A673 (cell line): ENCODE measurements at regions of chr17 and their contacts with region 1.

Region 1: GRCh38 chr17:58082870-58083490 is at the start of gene DYNLL2:
- DNase-seq: peak; percentile 97
- H3K4me3 ChIP-seq: peak within 1 kb of the TSS; percentile 95
- H3K27ac ChIP-seq: peak within 1 kb of the TSS; percentile 88
- H3K4me1 ChIP-seq: peaks cover 15% of the 10 kb centered on the region
- H3K27me3 ChIP-seq: peaks cover 14% of the 10 kb centered on the region
- CTCF ChIP-seq: no peak
- total RNA-seq, gene DYNLL2: 29.1 and 29.8 TPM in 2 replicates

Region 2: GRCh38 chr17:57849874-57850754 is 232.9 kb before region 1 on chr17 and contains the start of gene MRPS23:
- CTCF ChIA-PET with region 1: no interaction called
- POLR2A ChIA-PET with region 1: interaction called, 13 read pairs
- intact Hi-C with region 1: loop called (anchors 10 kb)
- DNase-seq: peak; percentile 99
- H3K4me3 ChIP-seq: peak within 1 kb of the TSS; percentile 85
- H3K27ac ChIP-seq: peak within 1 kb of the TSS; percentile 78
- H3K4me1 ChIP-seq: peaks cover 17% of the 10 kb centered on the region
- H3K27me3 ChIP-seq: no peaks in the 10 kb centered on the region
- CTCF ChIP-seq: no peak
- total RNA-seq, gene MRPS23: 94.2 and 100 TPM in 2 replicates

Region 3: DNA sequence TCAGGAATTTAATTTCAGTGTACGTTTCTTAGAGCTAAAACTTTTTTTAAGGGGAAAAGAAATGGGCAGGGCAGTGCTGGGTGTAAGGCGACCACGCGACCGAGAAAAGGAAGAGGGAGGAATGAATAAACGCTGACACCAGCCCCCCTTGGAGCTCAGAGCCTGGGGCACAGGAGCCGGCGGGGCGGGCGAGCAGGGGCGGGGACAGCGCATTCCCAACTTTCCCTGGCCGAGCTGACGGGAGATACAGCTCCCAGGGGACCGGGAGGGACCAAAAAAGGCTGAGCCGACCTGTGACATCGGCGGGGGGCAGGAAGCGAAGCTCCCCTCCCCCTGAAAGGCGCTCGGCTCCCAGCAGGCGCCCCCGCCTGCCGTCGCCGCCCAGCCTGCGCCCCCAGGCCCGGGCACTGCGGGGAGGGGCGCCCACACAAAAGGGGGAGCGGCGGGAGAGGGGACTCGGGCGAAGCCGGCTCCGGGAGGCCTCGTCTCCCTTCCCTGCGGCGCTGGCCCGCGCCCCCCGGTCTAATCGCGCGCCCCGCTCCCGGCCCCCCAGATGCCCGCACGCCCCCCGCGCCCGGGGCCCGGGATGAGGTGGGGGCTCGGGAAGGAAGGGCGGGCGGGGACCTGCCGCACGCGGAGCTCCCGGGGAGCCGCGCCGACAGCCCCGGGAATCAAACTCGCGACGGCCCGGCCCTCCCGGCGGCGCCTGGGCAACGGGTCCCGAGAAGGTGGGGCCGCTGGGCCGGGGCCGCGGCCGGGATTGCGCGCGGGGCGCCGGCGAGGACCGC is 128.4 kb before region 1 on chr17:
- CTCF ChIA-PET with region 1: no interaction called
- POLR2A ChIA-PET with region 1: interaction called, 12 read pairs
- intact Hi-C with region 1: no loop called
- DNase-seq: peak; percentile 95
- H3K4me3 ChIP-seq: peak overlapping the region; percentile 83
- H3K27ac ChIP-seq: peak overlapping the region; percentile 90
- H3K4me1 ChIP-seq: peaks cover 53% of the 10 kb centered on the region
- H3K27me3 ChIP-seq: no peaks in the 10 kb centered on the region
- CTCF ChIP-seq: no peak

Region 4: DNA sequence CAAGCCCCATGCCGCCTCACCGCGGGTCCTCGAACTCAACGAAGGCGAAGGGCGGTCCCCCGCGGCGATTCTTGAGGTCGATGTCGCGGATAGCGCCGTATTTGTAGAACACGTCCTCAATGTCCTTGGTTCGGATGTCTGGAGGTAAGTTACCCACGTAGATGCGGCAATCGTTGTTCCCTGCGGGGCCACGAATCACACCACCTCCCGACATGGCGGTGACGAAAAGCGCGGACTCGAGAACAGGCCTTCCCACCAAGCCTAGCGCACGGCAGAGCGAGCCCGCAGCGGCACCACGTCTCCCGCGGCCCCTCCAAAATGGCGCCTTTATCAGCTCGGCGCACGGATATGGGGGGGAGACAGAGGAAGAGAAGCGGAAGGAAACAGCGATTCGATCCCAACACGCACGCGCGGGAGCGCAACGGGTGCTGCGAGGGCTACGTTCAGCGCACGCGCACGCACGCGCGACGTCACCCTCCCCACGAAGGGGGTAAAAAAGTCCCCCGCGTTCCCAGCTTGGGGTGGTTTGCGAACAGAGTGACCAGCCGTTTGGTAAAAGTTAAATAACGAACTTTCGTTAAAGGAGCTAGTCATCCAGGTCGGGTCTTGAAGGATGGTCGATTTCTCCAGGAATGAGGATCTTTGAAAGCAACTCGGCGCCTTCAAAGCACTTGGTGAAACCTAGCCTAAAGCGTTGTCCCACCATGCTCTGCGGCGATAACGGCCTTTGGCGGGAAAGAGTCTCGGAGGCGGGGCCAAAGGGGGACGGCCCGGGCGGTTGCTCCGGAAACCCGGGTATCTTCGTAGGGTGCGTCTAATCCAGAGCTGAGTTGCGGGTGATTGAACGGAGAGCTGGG is 75.8 kb before region 1 on chr17 and contains the start of gene SRSF1:
- CTCF ChIA-PET with region 1: no interaction called
- POLR2A ChIA-PET with region 1: interaction called, 11 read pairs
- intact Hi-C with region 1: loop called (anchors 5 kb)
- DNase-seq: peak; percentile 99
- H3K4me3 ChIP-seq: peak within 1 kb of the TSS; percentile 88
- H3K27ac ChIP-seq: peak within 1 kb of the TSS; percentile 98
- H3K4me1 ChIP-seq: peaks cover 31% of the 10 kb centered on the region
- H3K27me3 ChIP-seq: no peaks in the 10 kb centered on the region
- CTCF ChIP-seq: no peak
- total RNA-seq, gene SRSF1: 491 and 512 TPM in 2 replicates